ENCODE measurements at regions of chr11 and their contacts with region 1.

Region 1: DNA sequence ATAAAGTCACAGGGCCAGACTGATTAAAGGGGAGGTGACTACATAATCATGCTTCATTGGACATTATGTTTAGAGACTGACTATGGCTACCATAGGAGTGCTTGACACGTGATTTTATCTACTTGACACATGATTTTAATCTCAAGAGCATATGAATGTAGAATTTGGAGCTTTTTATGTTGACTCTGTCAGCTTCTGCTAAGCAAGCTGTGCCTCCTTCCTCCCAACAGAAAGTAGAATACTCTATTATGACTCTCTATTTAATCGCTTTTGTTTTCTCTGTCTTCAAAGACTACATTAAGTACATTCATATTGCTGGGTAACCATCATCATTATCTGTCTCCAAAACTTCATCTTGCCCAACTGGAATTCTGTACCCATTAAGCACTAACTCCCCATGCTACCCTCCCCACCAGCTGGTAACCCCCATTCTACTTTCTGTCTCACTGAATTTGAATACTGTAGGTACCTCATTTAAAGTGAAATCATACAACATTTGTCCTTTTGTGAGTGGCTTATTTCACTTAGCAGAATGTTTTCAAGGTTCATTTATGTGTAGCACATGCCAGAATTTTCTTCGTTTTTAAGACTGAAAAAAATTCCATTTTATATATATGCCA is 24.7 kb upstream of the ANGPTL5 start:
- DNase-seq: no peak
- H3K4me3 ChIP-seq: no peak overlapping the region
- H3K27ac ChIP-seq: no peak overlapping the region
- H3K4me1 ChIP-seq: no peaks in the 10 kb centered on the region
- H3K27me3 ChIP-seq: no peaks in the 10 kb centered on the region
- CTCF ChIP-seq: no peak
- POLR2A ChIP-seq: no peak

Region 2: GRCh38 chr11:101963236-101963635 is 22.2 kb after region 1 on chr11:
- CTCF ChIA-PET with region 1: no interaction called
- POLR2A ChIA-PET with region 1: no interaction called
- dilution Hi-C with region 1: no loop called
- intact Hi-C with region 1: loop called (anchors 2 kb)
- DNase-seq: no peak
- H3K4me3 ChIP-seq: no peak overlapping the region
- H3K27ac ChIP-seq: no peak overlapping the region
- H3K4me1 ChIP-seq: no peaks in the 10 kb centered on the region
- H3K27me3 ChIP-seq: no peaks in the 10 kb centered on the region
- CTCF ChIP-seq: no peak
- POLR2A ChIP-seq: no peak

Measured in endothelial cell of umbilical vein (primary cell).